Heart left ventricle (tissue), 16 donors: ENCODE measurements at regions of chr12 and their contacts with region 1.

Region 1: GRCh38 chr12:40892528-40892927 is 200.3 kb downstream of the CNTN1 start:
- DNase-seq: no peak
- ATAC-seq: no peak
- H3K4me3 ChIP-seq: no peak overlapping the region
- H3K27ac ChIP-seq: no peak overlapping the region
- H3K4me1 ChIP-seq: no peaks in the 10 kb centered on the region
- H3K27me3 ChIP-seq: no peaks in the 10 kb centered on the region
- CTCF ChIP-seq: no peak
- POLR2A ChIP-seq: no peak

Region 2: GRCh38 chr12:40829738-40830144 is 62.8 kb before region 1 on chr12:
- intact Hi-C with region 1: loop called in 1 of 10 experiments (anchors 10 kb)
- DNase-seq: no peak
- ATAC-seq: no peak
- H3K4me3 ChIP-seq: no peak overlapping the region
- H3K27ac ChIP-seq: no peak overlapping the region
- H3K4me1 ChIP-seq: no peaks in the 10 kb centered on the region
- H3K27me3 ChIP-seq: peaks cover 0 to 4% (median 0%) of the 10 kb centered on the region in 9 donors
- CTCF ChIP-seq: no peak
- POLR2A ChIP-seq: no peak